Panc1 (cell line): ENCODE measurements at regions of chr18 and their contacts with region 1.

Region 1: DNA sequence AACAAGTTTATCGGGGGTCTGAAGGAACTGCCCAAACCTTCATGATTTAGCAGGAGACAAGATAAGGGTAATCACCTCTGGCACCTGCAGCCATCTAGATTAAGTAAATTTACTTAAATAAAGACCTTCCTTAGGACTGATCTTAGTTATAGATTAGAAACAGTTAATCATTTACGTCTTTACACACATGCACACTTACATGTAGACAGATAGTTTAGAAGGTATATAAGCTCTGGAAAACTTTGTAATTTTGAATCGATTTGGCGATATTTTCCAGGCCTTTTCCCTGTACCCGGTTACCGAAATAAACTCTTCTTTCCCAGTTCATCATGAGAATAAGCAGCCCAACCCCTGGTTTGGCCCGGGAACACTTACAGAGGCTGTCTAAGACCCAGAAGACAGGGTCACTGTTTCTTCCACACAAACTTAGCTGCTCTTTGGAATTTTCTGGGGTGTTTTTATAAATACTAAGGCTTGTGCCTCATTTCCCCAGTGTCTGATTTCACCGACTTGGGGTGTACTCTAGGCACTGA is 560 bp upstream of the SKA1 start:
- DNase-seq: no peak
- ATAC-seq: no peak
- H3K4me3 ChIP-seq: peak overlapping the region; percentile 78 to 85
- H3K27ac ChIP-seq: peak overlapping the region; percentile 93
- H3K4me1 ChIP-seq: no peaks in the 10 kb centered on the region; the same call in 1 of the 2 replicates
- H3K27me3 ChIP-seq: no peaks in the 10 kb centered on the region
- CTCF ChIP-seq: no peak

Region 2: DNA sequence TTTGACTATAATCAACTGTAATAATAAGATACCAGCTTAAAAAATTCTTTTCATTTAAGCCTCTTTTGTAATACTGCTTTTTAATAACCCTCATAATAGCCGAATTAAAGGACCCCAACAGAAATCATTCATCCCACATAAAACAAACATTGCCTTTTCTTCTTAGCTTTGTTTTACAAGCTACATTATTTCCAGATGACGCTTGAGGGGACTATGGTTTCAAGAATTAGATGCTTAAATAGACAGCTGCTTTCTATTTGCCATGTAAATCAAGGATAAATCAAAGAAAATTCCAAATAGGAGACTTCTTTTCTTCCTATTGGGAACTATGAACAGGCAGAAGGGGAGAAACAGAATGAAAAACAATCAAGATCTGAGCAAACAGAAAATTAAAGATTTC is 1222.8 kb before region 1 on chr18:
- CTCF ChIA-PET with region 1: interaction called, 14 read pairs
- POLR2A ChIA-PET with region 1: no interaction called
- in situ Hi-C with region 1: no loop called
- intact Hi-C with region 1: no loop called
- DNase-seq: no peak
- ATAC-seq: no peak
- H3K4me3 ChIP-seq: no peak overlapping the region
- H3K27ac ChIP-seq: no peak overlapping the region
- H3K4me1 ChIP-seq: no peaks in the 10 kb centered on the region
- H3K27me3 ChIP-seq: no peaks in the 10 kb centered on the region
- CTCF ChIP-seq: no peak

Region 3: GRCh38 chr18:50218432-50219197 is 155.7 kb before region 1 on chr18:
- CTCF ChIA-PET with region 1: no interaction called
- POLR2A ChIA-PET with region 1: no interaction called
- in situ Hi-C with region 1: no loop called
- intact Hi-C with region 1: no loop called
- DNase-seq: no peak
- ATAC-seq: no peak; the same call in 1 of the 2 replicates
- H3K4me3 ChIP-seq: no peak overlapping the region
- H3K27ac ChIP-seq: no peak overlapping the region
- H3K4me1 ChIP-seq: no peaks in the 10 kb centered on the region
- H3K27me3 ChIP-seq: no peaks in the 10 kb centered on the region; the same call in 1 of the 2 replicates
- CTCF ChIP-seq: peak; percentile 39

Region 4: GRCh38 chr18:50388988-50389387 is 14.7 kb after region 1 on chr18:
- CTCF ChIA-PET with region 1: no interaction called
- POLR2A ChIA-PET with region 1: interaction called, 25 read pairs
- in situ Hi-C with region 1: no loop called
- intact Hi-C with region 1: no loop called
- DNase-seq: no peak
- ATAC-seq: no peak
- H3K4me3 ChIP-seq: no peak overlapping the region
- H3K27ac ChIP-seq: no peak overlapping the region
- H3K4me1 ChIP-seq: no peaks in the 10 kb centered on the region
- H3K27me3 ChIP-seq: no peaks in the 10 kb centered on the region
- CTCF ChIP-seq: no peak

Region 5: DNA sequence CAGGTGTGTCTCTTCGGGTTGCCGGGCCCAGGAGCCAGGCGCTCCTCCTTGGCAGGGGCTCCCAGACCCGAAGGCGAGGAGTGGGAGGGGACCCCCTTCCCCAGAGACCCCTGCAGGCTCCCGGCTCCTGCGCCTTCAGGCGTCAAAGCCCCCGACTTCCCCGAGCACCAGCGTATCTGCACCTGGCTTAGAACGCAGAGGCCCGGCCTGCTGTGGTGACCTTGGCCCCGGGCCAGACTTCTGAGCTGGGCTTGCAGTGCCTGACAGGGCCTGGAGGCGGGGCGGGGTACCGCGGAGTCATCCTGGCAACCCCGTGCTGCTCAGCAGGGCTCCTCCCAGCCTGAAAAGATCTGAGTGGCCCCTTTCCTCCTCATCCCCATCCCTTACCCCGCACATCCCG is 27.6 kb after region 1 on chr18:
- CTCF ChIA-PET with region 1: no interaction called
- POLR2A ChIA-PET with region 1: no interaction called
- in situ Hi-C with region 1: no loop called
- intact Hi-C with region 1: no loop called
- DNase-seq: no peak
- ATAC-seq: no peak
- H3K4me3 ChIP-seq: no peak overlapping the region
- H3K27ac ChIP-seq: no peak overlapping the region
- H3K4me1 ChIP-seq: no peaks in the 10 kb centered on the region
- H3K27me3 ChIP-seq: no peaks in the 10 kb centered on the region
- CTCF ChIP-seq: no peak